Heart left ventricle (tissue), 16 donors: ENCODE measurements at regions of chr11 and their contacts with region 1.

Region 1: GRCh38 chr11:128290106-128290840 is 297.1 kb downstream of the ETS1 start:
- DNase-seq: peak; percentile 46 to 73 (median 70)
- ATAC-seq: peak; percentile 74 to 91 (median 88)
- H3K4me3 ChIP-seq: peak overlapping the region in 9 of 12 donors; percentile 4 to 44 (median 18)
- H3K27ac ChIP-seq: peak overlapping the region in 9 of 12 donors; percentile 27 to 87 (median 51)
- H3K4me1 ChIP-seq: peaks cover 3 to 52% (median 27%) of the 10 kb centered on the region in 12 donors
- H3K27me3 ChIP-seq: no peaks in the 10 kb centered on the region
- CTCF ChIP-seq: peak; percentile 83 to 91 (median 86)
- POLR2A ChIP-seq: peak in 1 of 2 donors; percentile 18

Region 2: DNA sequence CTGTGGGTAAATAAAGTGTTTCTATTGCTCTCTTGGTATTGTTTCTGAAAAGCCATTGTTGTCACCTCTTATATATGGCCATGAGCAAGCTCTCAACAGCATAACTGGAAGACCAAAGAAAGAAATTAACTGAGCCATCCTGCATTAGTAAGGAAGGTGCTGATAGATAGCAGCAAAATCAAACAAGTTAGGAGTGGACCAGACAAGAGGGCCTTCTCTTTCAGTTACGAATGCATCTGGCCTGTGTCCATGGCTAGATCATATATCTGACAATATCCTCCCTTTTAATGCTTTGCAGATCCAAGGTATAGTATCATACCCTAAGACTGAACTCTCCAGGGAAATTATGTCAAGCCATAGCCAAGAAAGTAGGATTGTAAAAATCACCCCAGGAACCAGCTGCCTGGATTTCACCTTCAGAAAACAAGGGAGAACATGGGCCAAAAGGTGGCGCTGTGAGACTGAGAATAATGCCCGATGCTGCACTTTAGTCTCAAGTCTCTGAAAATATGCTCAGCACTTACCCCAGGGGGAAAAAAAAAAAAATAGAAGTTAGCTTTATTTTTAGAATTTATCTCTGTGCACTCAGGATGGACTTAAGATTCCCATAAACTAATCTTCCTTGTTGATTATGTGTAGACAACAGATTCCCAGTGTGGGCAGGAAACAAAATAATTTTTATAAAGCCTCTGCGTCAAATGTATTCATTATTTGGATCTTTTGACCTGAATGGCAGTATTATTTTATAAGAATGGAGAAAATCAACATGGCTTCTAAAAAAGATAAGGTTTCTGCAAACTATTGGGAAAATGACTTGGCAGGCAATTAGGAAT is 118.0 kb before region 1 on chr11:
- intact Hi-C with region 1: loop called in 9 of 10 experiments (anchors 2 to 10 kb)
- DNase-seq: peak; percentile 74 to 83 (median 80)
- ATAC-seq: peak in 3 of 4 donors; percentile 77 to 85 (median 84)
- H3K4me3 ChIP-seq: no peak overlapping the region
- H3K27ac ChIP-seq: peak overlapping the region in 1 of 12 donors; percentile 19
- H3K4me1 ChIP-seq: peaks cover 0 to 8% (median 0%) of the 10 kb centered on the region in 12 donors
- H3K27me3 ChIP-seq: peaks cover 0 to 7% (median 0%) of the 10 kb centered on the region in 9 donors
- CTCF ChIP-seq: peak; percentile 50 to 91 (median 80)
- POLR2A ChIP-seq: no peak

Region 3: GRCh38 chr11:128342511-128343134 is 52.4 kb after region 1 on chr11:
- intact Hi-C with region 1: loop called in 1 of 10 experiments (anchors 5 kb)
- DNase-seq: peak in 4 of 5 donors; percentile 64 to 81 (median 70)
- ATAC-seq: peak; percentile 88 to 93 (median 93)
- H3K4me3 ChIP-seq: no peak overlapping the region
- H3K27ac ChIP-seq: peak overlapping the region; percentile 11 to 89 (median 73)
- H3K4me1 ChIP-seq: peaks cover 0 to 40% (median 21%) of the 10 kb centered on the region in 12 donors
- H3K27me3 ChIP-seq: no peaks in the 10 kb centered on the region
- CTCF ChIP-seq: no peak
- POLR2A ChIP-seq: no peak

Region 4: GRCh38 chr11:128453444-128454336 is 163.4 kb after region 1 on chr11:
- intact Hi-C with region 1: loop called in 1 of 10 experiments (anchors 10 kb)
- DNase-seq: peak in 4 of 5 donors; percentile 61 to 76 (median 69)
- ATAC-seq: peak; percentile 53 to 85 (median 76)
- H3K4me3 ChIP-seq: no peak overlapping the region
- H3K27ac ChIP-seq: peak overlapping the region in 5 of 12 donors; percentile 4 to 56 (median 39)
- H3K4me1 ChIP-seq: peaks cover 3 to 66% (median 33%) of the 10 kb centered on the region in 12 donors
- H3K27me3 ChIP-seq: no peaks in the 10 kb centered on the region
- CTCF ChIP-seq: no peak
- POLR2A ChIP-seq: no peak

Region 5: GRCh38 chr11:128522055-128522942 is 232.0 kb after region 1 on chr11:
- intact Hi-C with region 1: loop called in 2 of 10 experiments (anchors 10 kb)
- DNase-seq: peak; percentile 95 to 97 (median 96)
- ATAC-seq: peak; percentile 93 to 99 (median 96)
- H3K4me3 ChIP-seq: peak overlapping the region; percentile 63 to 93 (median 83)
- H3K27ac ChIP-seq: peak overlapping the region; percentile 94 to 98 (median 96)
- H3K4me1 ChIP-seq: peaks cover 8 to 74% (median 42%) of the 10 kb centered on the region in 12 donors
- H3K27me3 ChIP-seq: no peaks in the 10 kb centered on the region
- CTCF ChIP-seq: peak in 1 of 12 donors; percentile 5
- POLR2A ChIP-seq: peak; percentile 79 to 97

Region 6: DNA sequence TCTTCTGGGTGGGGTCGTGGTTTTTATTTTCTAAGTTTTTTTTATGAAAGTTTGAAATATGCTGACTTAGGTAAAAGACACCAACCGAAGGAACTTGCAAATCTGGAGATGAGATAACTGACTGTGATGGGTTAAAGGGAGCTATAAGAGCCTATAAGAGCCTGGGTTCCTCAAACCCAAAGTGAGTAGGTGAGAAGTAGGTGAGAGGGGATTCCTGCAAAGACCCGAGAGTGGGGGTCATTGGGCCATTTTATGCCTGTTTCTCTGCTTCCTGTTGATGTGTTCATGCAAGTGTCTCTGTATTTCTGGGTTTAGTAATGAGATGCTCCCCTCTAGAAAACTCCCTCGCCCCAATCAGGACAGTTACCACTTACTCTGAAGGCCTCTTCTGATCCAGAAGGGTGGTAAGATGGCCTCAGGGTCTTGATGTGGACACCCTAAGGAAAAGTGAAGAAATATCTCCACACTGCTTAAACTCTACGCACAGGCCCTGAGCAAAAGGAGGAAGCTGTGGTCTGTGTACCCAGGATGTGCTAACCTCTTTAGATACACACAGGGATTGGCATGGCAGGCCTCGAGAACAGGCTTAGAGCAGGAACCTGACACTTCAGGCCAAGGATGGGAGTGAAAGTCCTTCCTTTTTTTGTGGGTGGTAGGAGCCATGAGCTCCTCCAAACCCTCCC is 405.4 kb after region 1 on chr11:
- intact Hi-C with region 1: loop called in 1 of 10 experiments (anchors 5 kb)
- DNase-seq: peak in 2 of 5 donors; percentile 60
- ATAC-seq: peak; percentile 7 to 66 (median 34)
- H3K4me3 ChIP-seq: peak overlapping the region; percentile 67 to 97 (median 85)
- H3K27ac ChIP-seq: peak overlapping the region; percentile 89 to 98 (median 96)
- H3K4me1 ChIP-seq: peaks cover 0 to 70% (median 34%) of the 10 kb centered on the region in 12 donors
- H3K27me3 ChIP-seq: peaks cover 0 to 50% (median 0%) of the 10 kb centered on the region in 9 donors
- CTCF ChIP-seq: no peak
- POLR2A ChIP-seq: no peak

Region 7: GRCh38 chr11:129286813-129287212 is 996.5 kb after region 1 on chr11:
- intact Hi-C with region 1: no loop called
- DNase-seq: no peak
- ATAC-seq: peak in 2 of 4 donors; percentile 13 to 18
- H3K4me3 ChIP-seq: no peak overlapping the region
- H3K27ac ChIP-seq: peak overlapping the region in 1 of 12 donors; percentile 20
- H3K4me1 ChIP-seq: peaks cover 0 to 12% (median 0%) of the 10 kb centered on the region in 12 donors
- H3K27me3 ChIP-seq: peaks cover 0 to 15% (median 0%) of the 10 kb centered on the region in 9 donors
- CTCF ChIP-seq: no peak
- POLR2A ChIP-seq: no peak